Sigmoid colon (tissue), 7 donors: ENCODE measurements at regions of chr3 and their contacts with region 1.

Region 1: DNA sequence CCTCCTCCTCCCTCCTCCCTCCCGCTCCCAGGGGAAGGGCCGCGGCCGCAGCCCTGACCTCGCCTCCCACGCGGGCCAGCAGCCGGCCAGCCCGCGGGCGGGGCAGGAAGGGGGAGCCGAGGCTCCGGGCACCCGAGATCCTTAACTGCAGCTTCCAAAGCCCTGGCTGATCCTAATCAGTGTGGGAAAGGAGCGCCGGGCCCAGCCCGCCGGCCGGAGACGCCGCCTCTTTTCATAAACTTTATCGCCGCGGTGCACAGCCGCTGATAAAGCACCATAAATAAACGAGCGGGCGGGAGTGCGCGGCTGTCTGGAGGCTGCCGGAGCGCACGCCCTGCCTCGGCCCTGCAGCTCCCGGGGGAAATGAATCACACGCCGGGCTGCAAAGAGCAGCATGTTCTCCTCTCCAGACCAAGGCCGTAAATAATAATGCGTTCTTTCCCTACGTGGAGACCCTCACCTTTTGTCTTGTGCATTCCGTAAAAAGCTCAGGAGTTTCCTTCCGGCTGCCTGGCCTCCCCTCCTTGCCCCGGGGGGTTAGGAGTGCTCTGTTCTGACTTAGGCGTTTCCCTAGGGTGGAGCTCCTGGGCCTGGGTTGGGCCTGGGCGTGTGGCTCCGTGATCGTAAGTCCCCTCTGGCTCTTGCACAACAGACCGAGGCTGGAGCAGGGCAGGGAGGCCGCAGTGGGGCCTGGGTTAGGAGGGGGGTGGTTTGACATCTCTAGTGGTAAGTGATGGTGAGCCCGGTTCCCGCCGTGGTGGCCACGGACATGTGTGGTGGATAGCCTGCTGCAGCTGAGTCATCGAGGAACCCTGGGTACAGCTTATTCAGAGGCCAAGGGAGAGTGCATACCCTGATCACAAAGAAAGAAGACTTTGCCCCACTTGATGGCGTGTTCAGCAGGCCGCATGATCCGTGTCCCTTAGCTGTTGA is 132.6 kb upstream of the HES1 start:
- DNase-seq: peak; percentile 95
- H3K4me3 ChIP-seq: peak overlapping the region; percentile 26 to 53 (median 45)
- H3K27ac ChIP-seq: peak overlapping the region; percentile 77 to 87 (median 84)
- H3K4me1 ChIP-seq: peaks cover 0 to 24% (median 21%) of the 10 kb centered on the region in 4 donors
- H3K27me3 ChIP-seq: no peaks in the 10 kb centered on the region
- CTCF ChIP-seq: no peak
- EP300 ChIP-seq: peak; percentile 19 to 37 (median 32)
- POLR2A ChIP-seq: peak in 1 of 2 donors; percentile 21

Region 2: GRCh38 chr3:193788189-193788991 is 215.0 kb before region 1 on chr3:
- intact Hi-C with region 1: loop called (anchors 5 kb)
- DNase-seq: peak; percentile 84
- H3K4me3 ChIP-seq: no peak overlapping the region
- H3K27ac ChIP-seq: peak overlapping the region; percentile 30 to 61 (median 47)
- H3K4me1 ChIP-seq: peaks cover 3 to 18% (median 11%) of the 10 kb centered on the region in 4 donors
- H3K27me3 ChIP-seq: no peaks in the 10 kb centered on the region
- CTCF ChIP-seq: peak; percentile 25 to 81 (median 74)
- EP300 ChIP-seq: no peak
- POLR2A ChIP-seq: no peak

Region 3: DNA sequence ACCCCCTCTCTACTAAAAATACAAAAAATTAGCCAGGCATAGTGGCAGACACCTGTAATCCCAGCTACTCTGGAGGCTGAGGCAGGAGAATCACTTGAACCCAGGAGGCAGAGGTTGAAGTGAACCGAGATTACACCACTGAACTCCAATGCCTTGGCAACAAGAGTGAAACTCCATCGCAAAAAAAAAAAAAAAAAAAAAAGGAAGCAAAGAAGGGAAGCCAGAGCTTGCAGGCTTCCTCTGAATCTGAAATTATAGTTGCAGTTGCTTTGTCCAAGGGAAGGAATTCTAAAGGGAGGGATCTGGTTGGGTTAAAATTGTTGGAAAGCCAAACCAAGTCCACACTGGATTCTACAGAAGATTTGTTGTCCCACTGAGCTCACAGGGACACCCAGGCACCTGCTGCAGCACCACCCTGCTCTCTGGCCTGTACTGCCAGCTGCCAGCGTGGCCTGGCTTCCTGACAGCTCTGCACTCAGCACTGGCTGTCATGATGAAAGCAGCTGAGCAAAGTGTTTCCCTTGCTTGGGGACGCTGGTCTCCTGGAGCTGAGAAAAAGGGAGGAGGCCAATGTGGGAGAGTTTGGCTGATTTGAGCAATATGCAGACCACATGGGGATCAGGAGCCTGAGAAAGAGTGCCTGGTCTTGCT is 43.7 kb after region 1 on chr3:
- intact Hi-C with region 1: loop called (anchors 5 kb)
- DNase-seq: peak; percentile 80
- H3K4me3 ChIP-seq: no peak overlapping the region
- H3K27ac ChIP-seq: peak overlapping the region in 3 of 4 donors; percentile 16 to 48 (median 42)
- H3K4me1 ChIP-seq: peaks cover 0 to 11% (median 3%) of the 10 kb centered on the region in 4 donors
- H3K27me3 ChIP-seq: no peaks in the 10 kb centered on the region
- CTCF ChIP-seq: no peak
- EP300 ChIP-seq: no peak
- POLR2A ChIP-seq: no peak

Region 4: GRCh38 chr3:194070634-194071409 is 67.4 kb after region 1 on chr3:
- intact Hi-C with region 1: loop called (anchors 5 kb)
- DNase-seq: peak; percentile 88
- H3K4me3 ChIP-seq: peak overlapping the region; percentile 37 to 64 (median 56)
- H3K27ac ChIP-seq: peak overlapping the region; percentile 80 to 85 (median 82)
- H3K4me1 ChIP-seq: peaks cover 0 to 18% (median 16%) of the 10 kb centered on the region in 4 donors
- H3K27me3 ChIP-seq: no peaks in the 10 kb centered on the region
- CTCF ChIP-seq: no peak
- EP300 ChIP-seq: no peak
- POLR2A ChIP-seq: no peak

Region 5: GRCh38 chr3:194265483-194265892 is 262.1 kb after region 1 on chr3:
- intact Hi-C with region 1: loop called (anchors 5 kb)
- DNase-seq: peak; percentile 98
- H3K4me3 ChIP-seq: peak overlapping the region in 1 of 4 donors; percentile 14
- H3K27ac ChIP-seq: peak overlapping the region; percentile 61 to 92 (median 80)
- H3K4me1 ChIP-seq: peaks cover 0 to 36% (median 34%) of the 10 kb centered on the region in 4 donors
- H3K27me3 ChIP-seq: no peaks in the 10 kb centered on the region
- CTCF ChIP-seq: no peak
- EP300 ChIP-seq: peak in 3 of 4 donors; percentile 61 to 71 (median 69)
- POLR2A ChIP-seq: no peak